B cell (primary cell): ENCODE measurements at regions of chr4 and their contacts with region 1.

Region 1: GRCh38 chr4:77156533-77156911 is 485 bp upstream of the CCNG2 start:
- DNase-seq: peak; percentile 100
- ATAC-seq: peak; percentile 83
- H3K4me3 ChIP-seq: peak overlapping the region; percentile 81 to 96 (median 87)
- H3K4me3 Mint-ChIP-seq: peak overlapping the region; percentile 97
- H3K27ac ChIP-seq: peak overlapping the region; percentile 95
- H3K27ac Mint-ChIP-seq: peak overlapping the region; percentile 99
- H3K4me1 ChIP-seq: peaks cover 59 to 63% of the 10 kb centered on the region in 2 donors
- H3K4me1 Mint-ChIP-seq: peaks cover 70% of the 10 kb centered on the region
- H3K27me3 ChIP-seq: no peaks in the 10 kb centered on the region
- H3K27me3 Mint-ChIP-seq: no peaks in the 10 kb centered on the region
- CTCF ChIP-seq: no peak

Region 2: DNA sequence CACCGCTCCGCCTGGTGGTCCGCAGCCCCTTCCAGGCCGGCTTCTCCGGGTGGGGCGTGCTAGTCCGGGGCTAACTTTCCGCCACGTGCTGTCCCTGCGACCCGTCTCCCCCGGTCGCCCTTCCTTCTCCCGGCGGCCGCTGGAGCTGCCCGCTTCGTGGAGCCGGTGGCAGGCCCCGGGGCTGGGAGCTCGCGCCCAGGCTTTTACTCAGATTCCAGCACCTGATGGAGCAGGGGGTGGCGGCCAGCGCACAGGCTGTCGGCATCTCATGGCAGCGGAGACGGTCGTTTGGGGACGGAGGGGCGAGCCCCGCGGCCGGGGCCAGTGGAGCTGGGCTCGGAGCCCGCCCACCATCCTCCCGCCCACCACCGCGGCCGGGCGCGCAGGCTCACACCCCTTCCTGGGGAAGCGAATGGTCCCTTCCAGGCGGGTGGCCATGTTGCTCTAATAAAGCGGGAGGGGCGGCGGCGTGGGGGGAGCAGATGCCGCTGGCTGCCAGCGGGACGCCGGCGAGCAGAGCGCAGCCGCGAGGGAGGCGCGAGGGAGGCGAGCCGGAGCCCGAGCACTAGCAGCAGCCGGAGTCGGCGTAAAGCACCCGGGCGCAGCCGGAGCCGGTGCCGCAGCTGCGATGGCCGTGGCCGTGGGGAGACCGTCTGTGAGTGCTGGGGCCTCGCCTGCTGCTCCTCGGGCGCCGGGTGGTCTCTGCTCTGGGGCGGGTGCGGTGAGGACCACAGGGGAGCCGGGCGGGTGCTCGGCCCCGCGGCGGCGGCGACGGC is 207.1 kb before region 1 on chr4 and contains the start of gene SEPTIN11:
- CTCF ChIA-PET with region 1: no interaction called
- POLR2A ChIA-PET with region 1: no interaction called
- intact Hi-C with region 1: loop called (anchors 2 kb)
- DNase-seq: peak; percentile 89
- ATAC-seq: peak; percentile 80
- H3K4me3 ChIP-seq: peak within 1 kb of the TSS; percentile 34 to 87 (median 73)
- H3K4me3 Mint-ChIP-seq: peak within 1 kb of the TSS; percentile 93
- H3K27ac ChIP-seq: peak within 1 kb of the TSS in 1 of 2 donors; percentile 61
- H3K27ac Mint-ChIP-seq: peak within 1 kb of the TSS; percentile 86
- H3K4me1 ChIP-seq: peaks cover 10 to 16% of the 10 kb centered on the region in 2 donors
- H3K4me1 Mint-ChIP-seq: peaks cover 16% of the 10 kb centered on the region
- H3K27me3 ChIP-seq: no peaks in the 10 kb centered on the region
- H3K27me3 Mint-ChIP-seq: no peaks in the 10 kb centered on the region
- CTCF ChIP-seq: no peak
- total RNA-seq, gene SEPTIN11: 20.3 and 22.7 TPM in 2 replicates

Region 3: DNA sequence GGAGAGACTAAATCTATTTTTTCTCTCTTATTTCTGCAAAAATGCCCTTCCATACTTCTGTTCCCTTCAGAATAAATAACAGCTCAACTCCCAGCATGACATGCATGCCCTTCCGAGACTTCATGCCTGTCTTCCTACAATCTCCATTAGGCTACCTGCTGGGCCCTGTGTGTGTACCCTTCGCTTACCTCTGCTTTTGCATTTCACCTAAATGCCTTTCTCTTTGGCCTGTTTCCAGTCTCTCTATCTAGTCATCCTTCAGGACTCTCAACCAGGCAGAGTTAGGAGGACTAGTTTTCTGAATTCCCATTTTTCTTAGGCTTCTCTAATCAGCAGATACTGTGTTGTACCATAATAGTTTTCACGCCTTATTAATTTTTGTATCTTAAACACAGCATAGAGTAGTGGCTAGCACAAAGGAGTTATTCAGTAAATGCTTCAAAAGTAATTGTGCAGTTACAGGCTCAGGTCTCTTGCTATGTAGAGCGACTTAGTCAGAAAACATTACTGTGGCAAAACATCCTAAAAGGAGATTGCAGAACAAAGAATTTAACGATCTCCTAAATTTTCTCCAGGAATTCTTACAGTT is 186.5 kb before region 1 on chr4:
- CTCF ChIA-PET with region 1: no interaction called
- POLR2A ChIA-PET with region 1: no interaction called
- intact Hi-C with region 1: no loop called
- DNase-seq: no peak
- ATAC-seq: no peak
- H3K4me3 ChIP-seq: no peak overlapping the region
- H3K4me3 Mint-ChIP-seq: no peak overlapping the region
- H3K27ac ChIP-seq: no peak overlapping the region
- H3K27ac Mint-ChIP-seq: no peak overlapping the region
- H3K4me1 ChIP-seq: no peaks in the 10 kb centered on the region
- H3K4me1 Mint-ChIP-seq: no peaks in the 10 kb centered on the region
- H3K27me3 ChIP-seq: no peaks in the 10 kb centered on the region
- H3K27me3 Mint-ChIP-seq: no peaks in the 10 kb centered on the region
- CTCF ChIP-seq: no peak

Region 4: DNA sequence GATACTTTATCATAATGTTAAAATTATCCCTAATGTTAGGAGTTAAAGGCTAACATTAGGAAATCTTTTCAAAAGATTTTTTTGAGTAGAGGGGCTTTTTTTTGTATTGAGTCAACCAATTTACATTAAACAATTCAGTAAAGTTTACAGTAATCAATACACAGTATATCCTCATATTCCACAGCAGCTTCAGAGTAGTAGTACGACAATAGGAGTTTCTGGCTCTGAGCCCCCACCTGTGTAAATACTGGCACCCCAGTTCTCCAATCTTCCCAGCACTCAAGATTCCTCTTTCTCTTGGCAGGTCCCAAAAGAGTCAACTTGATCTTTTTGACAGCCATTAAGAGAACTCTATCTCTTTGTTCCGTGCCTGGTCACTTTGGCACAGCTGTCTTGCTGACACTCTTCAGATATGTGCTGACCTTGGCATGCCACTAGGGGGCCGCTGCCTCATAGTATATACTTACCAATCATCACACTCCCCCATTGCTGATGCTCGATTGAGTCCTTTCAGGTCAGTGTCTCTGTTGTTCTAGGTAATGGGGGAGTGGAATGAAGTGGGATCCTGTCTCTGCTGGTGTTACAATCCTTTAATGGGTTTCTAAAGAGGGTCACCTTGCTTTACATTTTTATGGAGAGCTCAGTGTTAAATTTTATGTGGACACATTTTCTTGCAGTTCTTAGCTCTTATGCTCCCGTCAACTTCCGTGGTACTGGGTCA is 61.3 kb before region 1 on chr4:
- CTCF ChIA-PET with region 1: interaction called, 72 read pairs
- POLR2A ChIA-PET with region 1: interaction called, 6 read pairs
- intact Hi-C with region 1: loop called (anchors 1 kb)
- DNase-seq: peak; percentile 81
- ATAC-seq: peak; percentile 99
- H3K4me3 ChIP-seq: no peak overlapping the region
- H3K4me3 Mint-ChIP-seq: no peak overlapping the region
- H3K27ac ChIP-seq: no peak overlapping the region
- H3K27ac Mint-ChIP-seq: no peak overlapping the region
- H3K4me1 ChIP-seq: peaks cover 21 to 25% of the 10 kb centered on the region in 2 donors
- H3K4me1 Mint-ChIP-seq: peaks cover 23% of the 10 kb centered on the region
- H3K27me3 ChIP-seq: no peaks in the 10 kb centered on the region
- H3K27me3 Mint-ChIP-seq: no peaks in the 10 kb centered on the region
- CTCF ChIP-seq: peak; percentile 95

Region 5: DNA sequence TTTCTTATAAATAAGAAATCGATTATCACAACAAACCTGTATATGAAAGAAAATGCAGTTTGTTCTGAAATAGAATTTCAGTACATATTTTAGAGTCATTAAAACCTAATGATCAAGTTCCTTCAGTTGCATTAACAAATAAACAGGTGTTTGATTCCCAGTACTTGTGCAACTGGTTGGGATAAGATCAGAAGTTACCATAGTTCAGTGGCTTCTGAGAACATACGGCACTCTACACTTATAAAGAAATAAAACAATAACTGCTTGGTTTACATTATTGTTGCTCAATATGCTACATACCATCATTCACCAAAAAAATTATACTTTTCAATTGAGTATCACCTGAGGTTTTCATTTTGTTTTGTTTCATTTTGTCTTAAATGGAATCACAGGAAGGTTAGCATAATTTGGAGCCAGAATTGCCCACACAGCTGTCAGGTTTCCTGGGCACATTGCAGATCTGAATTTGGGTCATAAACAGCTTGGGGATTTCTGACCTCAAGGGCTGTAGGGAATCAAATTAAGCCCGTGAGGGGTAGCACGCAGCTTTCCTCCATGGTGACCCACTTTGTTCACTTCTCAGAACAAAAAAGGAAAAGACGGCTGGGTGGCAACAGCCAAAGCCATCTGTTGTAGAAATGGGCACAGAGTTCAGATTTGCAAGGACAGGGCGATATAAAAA is 14.4 kb before region 1 on chr4:
- CTCF ChIA-PET with region 1: interaction called, 6 read pairs
- POLR2A ChIA-PET with region 1: interaction called, 11 read pairs
- intact Hi-C with region 1: loop called (anchors 2 kb)
- DNase-seq: no peak
- ATAC-seq: no peak
- H3K4me3 ChIP-seq: no peak overlapping the region
- H3K4me3 Mint-ChIP-seq: no peak overlapping the region
- H3K27ac ChIP-seq: no peak overlapping the region
- H3K27ac Mint-ChIP-seq: no peak overlapping the region
- H3K4me1 ChIP-seq: peaks cover 21 to 26% of the 10 kb centered on the region in 2 donors
- H3K4me1 Mint-ChIP-seq: peaks cover 24% of the 10 kb centered on the region
- H3K27me3 ChIP-seq: no peaks in the 10 kb centered on the region
- H3K27me3 Mint-ChIP-seq: no peaks in the 10 kb centered on the region
- CTCF ChIP-seq: no peak

Region 6: GRCh38 chr4:77819843-77820648 is 663.5 kb after region 1 on chr4:
- CTCF ChIA-PET with region 1: no interaction called
- POLR2A ChIA-PET with region 1: interaction called, 6 read pairs
- intact Hi-C with region 1: loop called (anchors 10 kb)
- DNase-seq: peak; percentile 95
- ATAC-seq: peak; percentile 75
- H3K4me3 ChIP-seq: peak overlapping the region; percentile 74 to 98 (median 88)
- H3K4me3 Mint-ChIP-seq: peak overlapping the region; percentile 98
- H3K27ac ChIP-seq: peak overlapping the region; percentile 94 to 99
- H3K27ac Mint-ChIP-seq: peak overlapping the region; percentile 99
- H3K4me1 ChIP-seq: peaks cover 42 to 45% of the 10 kb centered on the region in 2 donors
- H3K4me1 Mint-ChIP-seq: peaks cover 49% of the 10 kb centered on the region
- H3K27me3 ChIP-seq: no peaks in the 10 kb centered on the region
- H3K27me3 Mint-ChIP-seq: no peaks in the 10 kb centered on the region
- CTCF ChIP-seq: no peak